Activated B cell treated with CpG ODN at 0.5 μM for 24 hours (primary cell): ENCODE measurements at regions of chrX and their contacts with region 1.

Region 1: GRCh38 chrX:106302242-106302662 is 134.1 kb downstream of the PWWP3B start:
- DNase-seq: no peak
- ATAC-seq: no peak
- H3K4me3 Mint-ChIP-seq: no peak overlapping the region
- H3K27ac Mint-ChIP-seq: no peak overlapping the region
- H3K4me1 Mint-ChIP-seq: no peaks in the 10 kb centered on the region
- H3K27me3 Mint-ChIP-seq: no peaks in the 10 kb centered on the region
- CTCF ChIP-seq: no peak

Region 2: DNA sequence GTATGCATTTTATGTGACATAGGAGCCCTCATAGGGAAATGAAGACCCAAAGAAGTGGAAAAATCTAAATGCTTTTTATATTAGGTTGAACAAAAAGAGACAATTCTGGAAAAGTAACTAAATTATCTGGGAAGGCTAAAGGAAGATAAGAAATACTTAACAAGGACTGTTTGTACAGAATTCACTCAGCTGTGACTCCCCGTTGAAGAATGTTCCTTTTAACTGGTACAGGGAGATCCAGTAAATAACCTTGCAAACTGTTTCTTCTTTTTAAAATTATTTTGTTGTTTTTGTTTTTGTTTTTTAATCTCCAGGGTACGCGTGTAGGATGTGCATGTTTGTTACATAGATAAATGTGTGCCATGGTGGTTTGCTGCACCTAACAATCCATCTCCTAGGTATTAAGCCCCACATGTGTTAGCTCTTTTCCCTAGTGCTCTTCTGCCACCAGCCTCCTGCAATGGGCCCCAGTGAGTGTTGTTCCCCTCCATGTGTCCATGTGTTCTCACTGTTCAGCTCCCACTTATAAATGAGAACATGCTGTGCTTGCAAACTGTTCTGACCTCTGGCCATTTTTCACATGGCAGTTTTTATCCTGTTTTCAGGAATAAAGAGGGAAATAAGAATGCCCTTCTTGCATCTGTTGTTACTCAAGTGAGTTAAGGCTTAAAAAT is 52.4 kb before region 1 on chrX:
- CTCF ChIA-PET with region 1: no interaction called
- POLR2A ChIA-PET with region 1: no interaction called
- intact Hi-C with region 1: loop called (anchors 10 kb)
- DNase-seq: no peak
- ATAC-seq: no peak
- H3K4me3 Mint-ChIP-seq: no peak overlapping the region
- H3K27ac Mint-ChIP-seq: no peak overlapping the region
- H3K4me1 Mint-ChIP-seq: no peaks in the 10 kb centered on the region
- H3K27me3 Mint-ChIP-seq: no peaks in the 10 kb centered on the region
- CTCF ChIP-seq: no peak

Region 3: DNA sequence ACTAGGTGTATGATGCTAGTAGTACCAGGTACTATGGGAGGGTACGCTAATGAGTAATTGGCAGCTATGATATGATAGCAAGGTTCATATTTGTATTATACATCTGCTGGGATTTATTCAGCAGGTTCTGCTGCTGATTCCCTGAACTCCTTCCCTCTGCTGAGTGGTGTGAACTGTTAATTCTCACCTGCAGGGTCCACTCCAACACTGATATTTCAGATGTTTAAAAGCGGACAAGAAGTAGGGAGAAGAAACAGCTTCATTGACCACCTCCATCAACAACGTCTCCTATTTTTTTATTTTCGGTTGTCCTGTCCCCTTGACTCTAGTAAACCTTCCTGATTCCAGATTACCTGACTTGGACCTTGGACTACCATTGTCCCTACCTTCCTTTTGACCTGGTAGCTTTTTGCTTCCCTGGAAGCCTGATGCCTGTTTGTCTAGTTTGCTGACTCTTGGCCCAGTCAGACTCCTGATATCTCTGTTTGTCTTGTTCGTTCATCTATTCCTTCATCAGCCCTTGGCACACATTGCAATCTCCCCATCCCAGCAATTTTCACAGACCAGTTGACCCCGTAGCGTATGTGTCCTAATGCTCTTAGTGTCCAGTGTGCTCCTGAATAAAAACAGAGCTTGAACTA is 390.3 kb after region 1 on chrX:
- CTCF ChIA-PET with region 1: no interaction called
- POLR2A ChIA-PET with region 1: no interaction called
- intact Hi-C with region 1: no loop called
- DNase-seq: no peak
- ATAC-seq: no peak
- H3K4me3 Mint-ChIP-seq: no peak overlapping the region
- H3K27ac Mint-ChIP-seq: no peak overlapping the region
- H3K4me1 Mint-ChIP-seq: no peaks in the 10 kb centered on the region
- H3K27me3 Mint-ChIP-seq: no peaks in the 10 kb centered on the region
- CTCF ChIP-seq: no peak

Region 4: GRCh38 chrX:107213477-107213876 is 911.2 kb after region 1 on chrX:
- CTCF ChIA-PET with region 1: no interaction called
- POLR2A ChIA-PET with region 1: no interaction called
- intact Hi-C with region 1: no loop called
- DNase-seq: no peak
- ATAC-seq: no peak
- H3K4me3 Mint-ChIP-seq: no peak overlapping the region
- H3K27ac Mint-ChIP-seq: no peak overlapping the region
- H3K4me1 Mint-ChIP-seq: no peaks in the 10 kb centered on the region
- H3K27me3 Mint-ChIP-seq: no peaks in the 10 kb centered on the region
- CTCF ChIP-seq: no peak